CD4-positive, alpha-beta T cell (primary cell): ENCODE measurements at regions of chr15 and their contacts with region 1.

Region 1: DNA sequence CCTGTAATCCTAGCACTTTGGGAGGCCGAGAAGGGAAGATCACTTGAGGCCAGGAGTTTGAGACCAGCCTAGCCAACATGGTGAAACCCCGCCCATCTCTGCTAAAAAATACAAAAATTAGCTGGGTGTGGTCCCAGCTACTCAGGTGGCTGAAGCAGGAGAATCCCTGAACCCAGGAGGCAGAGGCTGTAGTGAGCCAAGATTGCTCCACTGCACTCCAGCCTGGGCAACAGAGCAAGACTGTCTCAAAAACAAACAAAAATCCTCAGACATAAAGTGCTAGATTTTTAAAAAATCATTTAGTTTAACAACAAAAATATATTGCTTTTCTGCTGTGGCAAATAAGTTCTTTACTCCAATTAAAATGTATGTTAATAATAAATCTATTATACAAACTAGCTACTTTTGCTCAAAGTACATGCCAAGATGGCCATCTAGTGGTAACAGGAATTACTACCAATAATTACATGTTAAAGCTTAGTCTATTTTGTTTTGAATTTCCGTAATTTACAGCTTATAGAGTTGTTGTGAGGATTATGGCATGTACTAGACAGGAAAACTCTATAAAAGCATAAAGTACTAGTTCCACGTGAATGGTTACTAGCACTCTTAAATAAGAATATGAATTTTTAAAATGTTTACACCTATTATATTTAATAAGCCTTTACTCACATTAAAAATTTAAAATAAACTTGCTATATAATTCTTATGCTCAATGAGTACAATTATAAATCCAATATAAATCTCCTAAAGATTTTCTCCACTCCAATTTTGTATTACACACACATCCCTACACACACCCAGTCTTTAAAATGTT is 39.0 kb downstream of the GABPB1 start:
- DNase-seq: peak in 3 of 14 experiments; percentile 63 to 69 (median 65)
- ATAC-seq: peak; percentile 49
- H3K4me3 ChIP-seq: no peak overlapping the region
- H3K4me3 Mint-ChIP-seq: no peak overlapping the region
- H3K27ac ChIP-seq: no peak overlapping the region
- H3K27ac Mint-ChIP-seq: no peak overlapping the region
- H3K4me1 ChIP-seq: no peaks in the 10 kb centered on the region
- H3K4me1 Mint-ChIP-seq: peaks cover 29% of the 10 kb centered on the region
- H3K27me3 ChIP-seq: no peaks in the 10 kb centered on the region
- H3K27me3 Mint-ChIP-seq: no peaks in the 10 kb centered on the region
- CTCF ChIP-seq: peak; percentile 83

Region 2: GRCh38 chr15:49235446-49236124 is 1080.4 kb before region 1 on chr15:
- CTCF ChIA-PET with region 1: interaction called, 4 read pairs
- POLR2A ChIA-PET with region 1: no interaction called
- intact Hi-C with region 1: loop called in 1 of 2 experiments (anchors 10 kb)
- DNase-seq: peak; percentile 7 to 70 (median 25)
- ATAC-seq: peak; percentile 59
- H3K4me3 ChIP-seq: no peak overlapping the region
- H3K4me3 Mint-ChIP-seq: no peak overlapping the region
- H3K27ac ChIP-seq: no peak overlapping the region
- H3K27ac Mint-ChIP-seq: peak overlapping the region; percentile 3
- H3K4me1 ChIP-seq: no peaks in the 10 kb centered on the region
- H3K4me1 Mint-ChIP-seq: peaks cover 14% of the 10 kb centered on the region
- H3K27me3 ChIP-seq: no peaks in the 10 kb centered on the region
- H3K27me3 Mint-ChIP-seq: no peaks in the 10 kb centered on the region
- CTCF ChIP-seq: peak; percentile 52

Region 3: DNA sequence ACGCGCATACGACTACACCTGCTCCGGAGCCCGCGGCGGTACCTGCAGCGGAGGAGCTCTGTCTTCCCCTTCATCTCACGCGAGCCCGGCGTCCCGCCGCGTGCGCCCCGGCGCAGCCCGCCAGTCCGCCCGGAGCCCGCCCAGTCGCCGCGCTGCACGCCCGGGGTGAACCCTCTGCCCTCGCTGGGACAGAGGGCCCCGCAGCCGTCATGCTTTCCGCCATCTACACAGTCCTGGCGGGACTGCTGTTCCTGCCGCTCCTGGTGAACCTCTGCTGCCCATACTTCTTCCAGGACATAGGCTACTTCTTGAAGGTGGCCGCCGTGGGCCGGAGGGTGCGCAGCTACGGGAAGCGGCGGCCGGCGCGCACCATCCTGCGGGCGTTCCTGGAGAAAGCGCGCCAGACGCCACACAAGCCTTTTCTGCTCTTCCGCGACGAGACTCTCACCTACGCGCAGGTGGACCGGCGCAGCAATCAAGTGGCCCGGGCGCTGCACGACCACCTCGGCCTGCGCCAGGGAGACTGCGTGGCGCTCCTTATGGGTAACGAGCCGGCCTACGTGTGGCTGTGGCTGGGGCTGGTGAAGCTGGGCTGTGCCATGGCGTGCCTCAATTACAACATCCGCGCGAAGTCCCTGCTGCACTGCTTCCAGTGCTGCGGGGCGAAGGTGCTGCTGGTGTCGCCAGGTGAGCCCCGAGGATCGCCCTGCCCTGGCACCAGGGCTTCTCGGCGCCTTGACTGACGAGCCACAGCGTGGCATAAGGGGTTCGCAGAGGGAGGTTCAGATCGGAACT is 133.6 kb before region 1 on chr15:
- CTCF ChIA-PET with region 1: interaction called, 5 read pairs
- POLR2A ChIA-PET with region 1: no interaction called
- intact Hi-C with region 1: loop called in 1 of 2 experiments (anchors 5 kb)
- DNase-seq: peak in 11 of 14 experiments; percentile 3 to 67 (median 13)
- ATAC-seq: peak; percentile 56
- H3K4me3 ChIP-seq: peak overlapping the region; percentile 59
- H3K4me3 Mint-ChIP-seq: peak overlapping the region; percentile 92
- H3K27ac ChIP-seq: no peak overlapping the region
- H3K27ac Mint-ChIP-seq: no peak overlapping the region
- H3K4me1 ChIP-seq: peaks cover 13% of the 10 kb centered on the region
- H3K4me1 Mint-ChIP-seq: peaks cover 22% of the 10 kb centered on the region
- H3K27me3 ChIP-seq: peaks cover 11 to 12% of the 10 kb centered on the region in 2 experiments
- H3K27me3 Mint-ChIP-seq: peaks cover 41% of the 10 kb centered on the region
- CTCF ChIP-seq: no peak